MCF 10A (cell line): ENCODE measurements at regions of chrX and their contacts with region 1.

Region 1: DNA sequence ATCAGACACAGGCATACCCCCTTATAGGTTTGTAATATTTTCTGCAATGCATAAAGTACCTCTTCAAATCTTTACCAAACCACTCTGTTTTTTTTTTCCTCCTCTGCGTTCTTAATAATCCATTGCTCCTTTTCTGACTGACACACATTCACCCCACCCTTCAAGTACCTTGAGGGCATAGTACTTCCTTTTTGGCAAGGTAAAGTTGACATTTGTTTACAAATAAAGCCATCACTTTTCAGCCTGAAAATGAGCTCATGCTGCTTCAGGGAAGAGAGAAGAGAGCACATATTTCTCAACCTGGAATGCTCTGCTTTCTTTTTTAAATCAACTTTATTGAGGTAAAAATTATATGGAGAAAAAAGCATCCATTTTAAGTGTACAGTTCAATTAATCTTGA is 113.8 kb downstream of the AGTR2 start:
- DNase-seq: peak; percentile 64
- H3K4me3 Mint-ChIP-seq: peak overlapping the region; percentile 2
- H3K27ac Mint-ChIP-seq: peak overlapping the region; percentile 2
- H3K4me1 Mint-ChIP-seq: peaks cover 18% of the 10 kb centered on the region
- H3K27me3 Mint-ChIP-seq: no peaks in the 10 kb centered on the region
- CTCF ChIP-seq: no peak

Region 2: GRCh38 chrX:116009861-116010710 is 274.3 kb before region 1 on chrX:
- CTCF ChIA-PET with region 1: no interaction called
- POLR2A ChIA-PET with region 1: no interaction called
- intact Hi-C with region 1: no loop called
- DNase-seq: no peak
- H3K4me3 Mint-ChIP-seq: peak overlapping the region; percentile 1
- H3K27ac Mint-ChIP-seq: no peak overlapping the region
- H3K4me1 Mint-ChIP-seq: peaks cover 16% of the 10 kb centered on the region
- H3K27me3 Mint-ChIP-seq: peaks cover 50% of the 10 kb centered on the region
- CTCF ChIP-seq: no peak

Region 3: DNA sequence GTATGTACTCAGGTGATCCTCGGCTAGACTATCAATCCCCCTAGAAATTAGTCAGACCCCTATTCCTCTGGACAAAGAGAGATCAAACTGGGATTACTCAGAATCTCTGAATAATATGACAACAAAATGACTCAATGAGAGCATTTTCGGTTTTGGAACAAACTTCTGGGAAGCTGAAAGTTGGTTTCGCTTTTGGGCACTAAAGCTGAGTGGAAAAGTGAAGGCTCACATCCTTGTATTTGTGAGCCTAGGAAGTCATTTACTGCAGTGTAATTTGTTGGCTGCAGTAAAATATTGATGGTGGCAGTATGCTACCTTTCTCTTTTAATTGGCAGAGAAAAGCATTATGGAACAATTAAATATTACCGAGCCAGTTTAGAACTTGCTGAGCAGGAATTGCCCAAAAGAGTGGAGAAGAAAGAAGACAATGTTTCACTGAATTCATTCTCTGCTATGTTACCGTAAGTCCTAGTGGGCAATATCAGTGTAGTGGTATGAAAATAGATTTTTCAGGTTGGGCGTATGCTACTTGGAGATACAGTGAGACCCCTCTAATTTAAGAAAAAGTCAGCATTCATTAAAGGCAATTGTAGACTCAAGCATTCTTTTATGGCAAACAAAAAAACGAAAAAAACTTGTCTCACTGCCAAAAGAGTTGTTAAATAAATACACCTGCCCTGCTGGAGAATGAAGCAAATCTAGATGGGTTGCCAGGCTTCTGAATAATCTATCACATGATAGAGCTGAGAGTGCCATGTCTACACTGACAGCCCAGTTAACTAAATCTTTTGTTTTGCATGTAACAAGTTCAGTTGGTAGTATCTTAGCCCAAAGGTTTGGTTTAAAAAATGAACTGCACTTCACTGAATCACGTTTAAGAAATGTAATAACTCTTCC is 44.2 kb before region 1 on chrX:
- CTCF ChIA-PET with region 1: no interaction called
- POLR2A ChIA-PET with region 1: interaction called, 3 read pairs
- intact Hi-C with region 1: loop called (anchors 10 kb)
- DNase-seq: peak; percentile 69
- H3K4me3 Mint-ChIP-seq: peak overlapping the region; percentile 62
- H3K27ac Mint-ChIP-seq: peak overlapping the region; percentile 55
- H3K4me1 Mint-ChIP-seq: peaks cover 20% of the 10 kb centered on the region
- H3K27me3 Mint-ChIP-seq: peaks cover 11% of the 10 kb centered on the region
- CTCF ChIP-seq: no peak

Region 4: GRCh38 chrX:116267511-116268040 is 16.8 kb before region 1 on chrX:
- CTCF ChIA-PET with region 1: interaction called, 10 read pairs
- POLR2A ChIA-PET with region 1: interaction called, 7 read pairs
- intact Hi-C with region 1: no loop called
- DNase-seq: no peak
- H3K4me3 Mint-ChIP-seq: no peak overlapping the region
- H3K27ac Mint-ChIP-seq: no peak overlapping the region
- H3K4me1 Mint-ChIP-seq: peaks cover 16% of the 10 kb centered on the region
- H3K27me3 Mint-ChIP-seq: peaks cover 12% of the 10 kb centered on the region
- CTCF ChIP-seq: no peak